Endothelial cell of umbilical vein (primary cell): ENCODE measurements at regions of chr7 and their contacts with region 1.

Region 1: GRCh38 chr7:24819916-24820689 is 62.8 kb upstream of the GSDME start:
- DNase-seq: peak; percentile 85
- H3K4me3 ChIP-seq: no peak overlapping the region
- H3K27ac ChIP-seq: peak overlapping the region; percentile 86
- H3K4me1 ChIP-seq: peaks cover 15% of the 10 kb centered on the region
- H3K27me3 ChIP-seq: no peaks in the 10 kb centered on the region
- CTCF ChIP-seq: peak; percentile 80 to 83
- POLR2A ChIP-seq: no peak

Region 2: DNA sequence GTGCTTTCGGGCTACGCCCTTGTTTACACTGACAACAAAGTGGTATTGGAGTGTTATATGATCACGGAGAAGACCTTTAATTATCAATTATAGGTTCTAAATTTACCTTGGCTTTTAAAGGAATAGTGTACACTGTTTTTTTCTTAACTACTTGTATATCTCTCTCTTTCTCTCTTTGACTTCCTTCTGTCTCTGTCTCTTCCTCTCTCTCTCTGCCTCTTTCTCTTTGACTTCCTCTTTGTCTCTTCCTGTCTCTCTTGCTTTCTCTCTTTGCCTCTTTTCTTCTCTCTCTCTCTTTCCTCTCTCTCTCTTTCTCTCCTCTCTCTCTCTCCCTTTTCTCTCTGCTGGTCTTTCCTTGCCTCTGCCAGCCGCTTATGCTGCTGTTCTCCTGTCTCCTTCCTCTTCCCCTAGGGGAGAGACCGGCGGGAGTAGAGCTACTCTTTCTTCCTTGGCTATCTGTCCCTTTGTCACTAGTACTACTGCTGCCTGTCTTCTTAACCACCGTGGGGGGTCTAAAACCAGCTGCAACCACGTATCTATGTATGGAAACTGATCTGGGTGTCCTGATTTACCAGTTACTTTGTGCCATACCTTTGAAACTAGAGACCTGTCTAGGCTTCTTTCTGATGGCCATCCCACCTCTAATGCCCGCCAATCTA is 26.0 kb before region 1 on chr7:
- CTCF ChIA-PET with region 1: no interaction called
- POLR2A ChIA-PET with region 1: no interaction called
- dilution Hi-C with region 1: no loop called
- intact Hi-C with region 1: no loop called
- DNase-seq: no peak
- H3K4me3 ChIP-seq: no peak overlapping the region
- H3K27ac ChIP-seq: no peak overlapping the region
- H3K4me1 ChIP-seq: no peaks in the 10 kb centered on the region
- H3K27me3 ChIP-seq: no peaks in the 10 kb centered on the region
- CTCF ChIP-seq: no peak
- POLR2A ChIP-seq: no peak

Region 3: DNA sequence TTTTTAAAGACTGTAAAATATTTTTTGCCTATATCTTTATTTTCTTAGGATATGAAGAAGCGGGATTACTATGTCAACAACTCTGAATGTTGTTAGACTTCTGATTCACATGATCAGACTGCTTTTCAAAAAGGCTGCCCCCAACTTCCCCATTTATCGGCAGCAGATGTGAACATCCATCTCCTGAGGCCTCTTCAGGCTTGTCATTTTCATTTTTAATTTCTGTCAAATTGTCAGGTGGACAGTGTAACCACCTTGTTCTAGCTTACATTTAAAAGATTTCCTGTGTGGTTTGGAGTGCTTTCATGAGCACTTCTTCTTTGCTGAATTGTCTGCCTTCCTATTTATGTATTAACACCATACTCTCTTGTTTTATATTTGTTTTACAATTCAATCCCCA is 16.0 kb after region 1 on chr7:
- CTCF ChIA-PET with region 1: interaction called, 14 read pairs
- POLR2A ChIA-PET with region 1: interaction called, 10 read pairs
- dilution Hi-C with region 1: no loop called
- intact Hi-C with region 1: no loop called
- DNase-seq: no peak
- H3K4me3 ChIP-seq: no peak overlapping the region
- H3K27ac ChIP-seq: no peak overlapping the region
- H3K4me1 ChIP-seq: peaks cover 16% of the 10 kb centered on the region
- H3K27me3 ChIP-seq: no peaks in the 10 kb centered on the region
- CTCF ChIP-seq: no peak
- POLR2A ChIP-seq: no peak

Region 4: GRCh38 chr7:24842449-24843241 is 22.5 kb after region 1 on chr7:
- CTCF ChIA-PET with region 1: interaction called, 11 read pairs
- POLR2A ChIA-PET with region 1: interaction called, 10 read pairs
- dilution Hi-C with region 1: no loop called
- intact Hi-C with region 1: loop called (anchors 1 kb)
- DNase-seq: peak; percentile 85
- H3K4me3 ChIP-seq: peak overlapping the region in 1 of 3 experiments; percentile 24
- H3K27ac ChIP-seq: peak overlapping the region; percentile 89
- H3K4me1 ChIP-seq: peaks cover 32% of the 10 kb centered on the region
- H3K27me3 ChIP-seq: no peaks in the 10 kb centered on the region
- CTCF ChIP-seq: no peak
- POLR2A ChIP-seq: no peak

Region 5: DNA sequence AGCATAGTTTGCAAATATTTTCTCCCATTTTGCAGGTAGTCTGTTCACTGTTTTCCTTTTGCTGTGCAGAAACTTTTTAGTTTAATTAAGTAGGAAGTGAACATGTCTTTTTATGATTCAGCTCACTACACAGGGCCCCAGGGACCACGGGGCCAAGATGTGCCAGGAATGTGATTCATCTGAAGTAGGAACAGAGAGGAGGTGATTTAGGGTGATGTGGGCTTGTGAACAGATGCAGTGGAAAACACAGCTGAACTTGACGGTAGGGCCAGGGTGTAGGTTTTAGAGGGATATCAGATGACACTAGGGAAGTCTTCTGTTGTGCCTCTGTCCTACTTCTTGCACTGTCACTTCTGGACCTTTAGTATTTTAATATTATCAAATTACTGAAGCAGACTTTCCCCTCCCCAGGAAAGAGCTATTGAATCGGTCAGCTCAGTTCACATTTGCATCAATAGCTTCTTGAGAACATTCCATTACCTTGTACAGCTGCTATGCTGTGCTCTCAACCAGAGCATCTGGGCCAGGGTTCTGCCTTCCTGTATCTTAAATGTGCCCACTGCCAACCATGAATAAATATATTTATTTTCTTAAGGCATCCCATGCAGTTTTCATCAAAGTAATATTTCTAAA is 63.0 kb after region 1 on chr7:
- CTCF ChIA-PET with region 1: interaction called, 15 read pairs
- POLR2A ChIA-PET with region 1: no interaction called
- dilution Hi-C with region 1: no loop called
- intact Hi-C with region 1: loop called (anchors 1 kb)
- DNase-seq: peak; percentile 67
- H3K4me3 ChIP-seq: no peak overlapping the region
- H3K27ac ChIP-seq: peak overlapping the region; percentile 23
- H3K4me1 ChIP-seq: peaks cover 47% of the 10 kb centered on the region
- H3K27me3 ChIP-seq: no peaks in the 10 kb centered on the region
- CTCF ChIP-seq: no peak
- POLR2A ChIP-seq: no peak

Region 6: GRCh38 chr7:24907311-24907886 is 87.3 kb after region 1 on chr7:
- CTCF ChIA-PET with region 1: interaction called, 3 read pairs
- POLR2A ChIA-PET with region 1: no interaction called
- dilution Hi-C with region 1: no loop called
- intact Hi-C with region 1: loop called (anchors 1 kb)
- DNase-seq: peak; percentile 89
- H3K4me3 ChIP-seq: peak overlapping the region in 1 of 3 experiments; percentile 28
- H3K27ac ChIP-seq: peak overlapping the region; percentile 90
- H3K4me1 ChIP-seq: peaks cover 61% of the 10 kb centered on the region
- H3K27me3 ChIP-seq: no peaks in the 10 kb centered on the region
- CTCF ChIP-seq: no peak
- POLR2A ChIP-seq: no peak

Region 7: DNA sequence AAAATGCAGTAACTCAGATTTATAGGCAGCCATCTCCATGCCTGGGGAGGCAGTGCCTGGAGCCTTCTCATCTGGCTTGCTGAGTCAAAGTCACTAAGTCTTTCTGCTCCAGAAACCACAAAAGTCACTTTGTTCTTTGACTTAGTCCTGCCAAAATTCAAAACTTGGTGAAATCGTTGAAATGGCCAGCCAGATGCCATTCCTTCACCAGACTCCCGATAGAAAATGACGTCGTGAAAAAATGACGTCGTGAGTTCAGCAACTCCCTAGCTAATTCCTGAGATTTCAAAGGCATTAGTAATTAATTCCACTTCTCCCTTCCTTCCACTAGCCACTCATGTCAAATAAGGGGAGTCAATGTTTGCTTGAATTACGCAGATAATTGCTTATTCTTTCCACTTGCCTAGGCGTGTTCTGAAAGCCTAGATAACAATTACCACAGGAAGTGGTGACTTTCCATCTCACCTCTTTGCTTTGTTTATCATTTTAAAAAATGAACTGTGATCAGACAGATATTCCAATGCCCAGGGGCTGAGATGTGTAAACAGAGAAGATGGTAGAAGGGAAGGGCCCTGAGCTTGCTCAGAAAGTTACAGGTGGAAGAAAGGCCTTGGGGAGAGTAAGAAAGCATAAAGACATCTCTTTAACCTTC is 208.4 kb after region 1 on chr7:
- CTCF ChIA-PET with region 1: no interaction called
- POLR2A ChIA-PET with region 1: no interaction called
- dilution Hi-C with region 1: no loop called
- intact Hi-C with region 1: loop called (anchors 2 kb)
- DNase-seq: peak; percentile 78
- H3K4me3 ChIP-seq: no peak overlapping the region
- H3K27ac ChIP-seq: peak overlapping the region; percentile 95
- H3K4me1 ChIP-seq: peaks cover 38% of the 10 kb centered on the region
- H3K27me3 ChIP-seq: no peaks in the 10 kb centered on the region
- CTCF ChIP-seq: no peak
- POLR2A ChIP-seq: no peak

Region 8: GRCh38 chr7:25069900-25070443 is 249.9 kb after region 1 on chr7:
- CTCF ChIA-PET with region 1: interaction called, 77 read pairs
- POLR2A ChIA-PET with region 1: no interaction called
- dilution Hi-C with region 1: no loop called
- intact Hi-C with region 1: loop called (anchors 1 kb)
- DNase-seq: peak; percentile 70
- H3K4me3 ChIP-seq: no peak overlapping the region
- H3K27ac ChIP-seq: no peak overlapping the region
- H3K4me1 ChIP-seq: no peaks in the 10 kb centered on the region
- H3K27me3 ChIP-seq: peaks cover 0 to 2% of the 10 kb centered on the region in 2 experiments
- CTCF ChIP-seq: peak; percentile 65 to 73
- POLR2A ChIP-seq: no peak